ENCODE measurements at regions of chr12 and their contacts with region 1.

Region 1: DNA sequence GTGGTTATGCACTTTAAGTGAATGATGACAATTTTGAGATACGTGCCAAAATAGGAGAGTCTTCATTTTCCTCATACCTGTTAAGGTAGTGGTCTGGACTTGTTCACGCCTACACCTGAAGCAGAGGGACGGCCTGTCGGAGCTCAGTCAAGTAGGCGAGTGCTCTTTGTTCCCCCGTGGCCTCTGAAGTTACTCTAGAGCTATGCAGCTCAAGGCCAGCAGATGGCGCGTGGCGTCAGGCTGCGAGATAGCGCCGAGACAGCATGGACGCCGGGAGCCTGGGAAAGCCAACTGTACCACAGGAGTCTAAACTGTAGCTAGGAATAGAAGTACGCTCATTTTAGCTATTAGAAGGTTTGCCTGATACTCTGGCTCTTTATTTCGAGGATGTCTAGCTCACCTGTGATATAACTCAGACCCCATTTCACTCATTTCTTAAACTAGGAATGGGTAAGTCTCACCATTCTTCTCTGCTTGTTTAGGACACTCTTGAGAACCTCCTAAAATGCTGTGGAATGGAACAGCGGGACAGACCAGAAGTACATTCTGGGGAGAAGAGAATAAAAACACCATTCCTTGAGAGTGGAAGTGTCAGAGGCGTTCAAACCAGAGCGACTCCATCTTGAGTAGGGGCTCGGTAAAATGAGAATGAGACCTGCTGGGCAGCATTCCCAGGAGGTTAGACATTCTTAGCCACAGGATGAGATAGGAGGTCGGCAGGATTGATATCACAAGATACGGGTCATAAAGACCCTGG is 267.4 kb upstream of the HMGA2 start:
- DNase-seq: peak; percentile 36
- ATAC-seq: peak; percentile 71
- H3K4me3 Mint-ChIP-seq: no peak overlapping the region
- H3K27ac Mint-ChIP-seq: no peak overlapping the region
- H3K4me1 Mint-ChIP-seq: peaks cover 6% of the 10 kb centered on the region
- H3K27me3 Mint-ChIP-seq: peaks cover 13% of the 10 kb centered on the region
- CTCF ChIP-seq: no peak

Region 2: DNA sequence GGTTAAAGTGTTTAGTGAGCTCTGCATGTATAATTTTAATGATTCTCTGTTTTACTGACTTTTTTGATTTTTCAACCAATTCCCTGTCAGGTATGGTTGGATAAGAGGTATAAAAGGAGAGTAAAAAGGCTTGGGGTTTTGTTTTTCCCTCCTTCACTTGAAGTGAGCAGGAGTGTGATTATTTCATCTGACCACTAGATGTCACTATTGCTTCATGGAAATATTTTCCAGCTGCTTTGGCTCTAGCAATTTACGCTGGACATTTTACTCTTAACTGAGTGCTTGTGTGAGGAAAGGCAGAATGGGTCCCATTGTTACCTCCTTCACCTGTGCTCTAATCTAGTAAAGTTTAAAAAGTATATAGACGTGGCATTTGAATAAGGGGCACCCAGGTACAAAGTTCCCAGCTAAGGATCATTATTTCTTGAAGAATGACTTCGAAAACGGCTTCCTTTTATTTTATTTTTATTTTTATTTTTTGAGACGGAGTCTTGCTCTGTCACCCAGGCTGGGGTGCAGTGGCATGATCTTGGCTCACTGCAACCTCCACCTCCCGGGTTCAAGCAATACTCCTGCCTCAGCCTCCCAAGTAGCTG is 665.9 kb before region 1 on chr12:
- CTCF ChIA-PET with region 1: interaction called, 6 read pairs
- POLR2A ChIA-PET with region 1: no interaction called
- intact Hi-C with region 1: loop called (anchors 2 kb)
- DNase-seq: no peak
- ATAC-seq: no peak
- H3K4me3 Mint-ChIP-seq: no peak overlapping the region
- H3K27ac Mint-ChIP-seq: no peak overlapping the region
- H3K4me1 Mint-ChIP-seq: no peaks in the 10 kb centered on the region
- H3K27me3 Mint-ChIP-seq: peaks cover 34% of the 10 kb centered on the region
- CTCF ChIP-seq: peak; percentile 95

Region 3: GRCh38 chr12:65666876-65667275 is 110.0 kb after region 1 on chr12:
- CTCF ChIA-PET with region 1: no interaction called
- POLR2A ChIA-PET with region 1: no interaction called
- intact Hi-C with region 1: no loop called
- DNase-seq: no peak
- ATAC-seq: no peak
- H3K4me3 Mint-ChIP-seq: no peak overlapping the region
- H3K27ac Mint-ChIP-seq: no peak overlapping the region
- H3K4me1 Mint-ChIP-seq: no peaks in the 10 kb centered on the region
- H3K27me3 Mint-ChIP-seq: peaks cover 4% of the 10 kb centered on the region
- CTCF ChIP-seq: no peak

Region 4: DNA sequence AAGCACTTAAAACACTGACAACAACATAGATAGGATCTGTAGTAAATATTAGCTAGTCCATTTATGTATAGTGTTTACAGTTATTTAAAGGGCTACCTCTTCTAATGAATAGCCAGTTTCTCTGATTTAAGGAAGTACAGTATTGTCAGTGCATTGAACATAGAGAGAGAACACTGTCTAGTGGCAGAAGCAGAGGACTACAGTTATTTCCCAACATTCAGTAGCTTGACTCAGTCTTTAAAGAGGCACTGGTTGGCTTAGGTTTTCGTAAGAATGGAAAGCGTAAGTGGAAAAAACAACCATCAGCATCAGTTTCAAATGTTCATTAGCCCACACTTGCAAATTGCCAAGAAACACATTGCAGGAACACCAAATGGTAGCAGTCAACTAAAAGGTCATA is 142.4 kb after region 1 on chr12:
- CTCF ChIA-PET with region 1: no interaction called
- POLR2A ChIA-PET with region 1: no interaction called
- intact Hi-C with region 1: no loop called
- DNase-seq: no peak
- ATAC-seq: no peak
- H3K4me3 Mint-ChIP-seq: no peak overlapping the region
- H3K27ac Mint-ChIP-seq: no peak overlapping the region
- H3K4me1 Mint-ChIP-seq: no peaks in the 10 kb centered on the region
- H3K27me3 Mint-ChIP-seq: peaks cover 2% of the 10 kb centered on the region
- CTCF ChIP-seq: no peak

Region 5: DNA sequence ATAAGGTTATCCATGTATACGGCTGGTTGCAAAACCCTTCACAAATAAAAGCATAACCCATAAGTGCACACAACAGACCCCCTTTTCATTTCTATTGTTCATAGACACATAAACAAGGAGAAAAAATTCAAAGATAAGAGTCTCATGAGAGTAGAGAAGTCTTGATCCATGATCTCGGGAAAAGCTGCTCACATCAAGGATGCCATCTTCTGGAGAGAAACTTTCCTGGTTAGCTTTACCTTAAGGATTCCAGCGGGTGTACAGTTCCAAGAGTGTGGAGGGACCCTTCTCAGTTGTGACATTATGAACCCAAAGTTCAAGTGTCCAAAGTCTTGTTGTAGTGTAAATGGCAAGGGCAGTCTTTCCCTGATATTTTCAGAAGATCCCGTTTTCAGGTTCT is 429.2 kb after region 1 on chr12:
- CTCF ChIA-PET with region 1: no interaction called
- POLR2A ChIA-PET with region 1: no interaction called
- intact Hi-C with region 1: loop called (anchors 1 kb)
- DNase-seq: no peak
- ATAC-seq: no peak
- H3K4me3 Mint-ChIP-seq: no peak overlapping the region
- H3K27ac Mint-ChIP-seq: no peak overlapping the region
- H3K4me1 Mint-ChIP-seq: no peaks in the 10 kb centered on the region
- H3K27me3 Mint-ChIP-seq: no peaks in the 10 kb centered on the region
- CTCF ChIP-seq: no peak

Region 6: GRCh38 chr12:66035288-66035966 is 478.6 kb after region 1 on chr12:
- CTCF ChIA-PET with region 1: interaction called, 8 read pairs
- POLR2A ChIA-PET with region 1: no interaction called
- intact Hi-C with region 1: loop called (anchors 1 kb)
- DNase-seq: no peak
- ATAC-seq: no peak
- H3K4me3 Mint-ChIP-seq: no peak overlapping the region
- H3K27ac Mint-ChIP-seq: no peak overlapping the region
- H3K4me1 Mint-ChIP-seq: no peaks in the 10 kb centered on the region
- H3K27me3 Mint-ChIP-seq: peaks cover 6% of the 10 kb centered on the region
- CTCF ChIP-seq: no peak

Region 7: GRCh38 chr12:66087365-66087943 is 530.6 kb after region 1 on chr12:
- CTCF ChIA-PET with region 1: interaction called, 6 read pairs
- POLR2A ChIA-PET with region 1: no interaction called
- intact Hi-C with region 1: loop called (anchors 1 kb)
- DNase-seq: no peak
- ATAC-seq: peak; percentile 49
- H3K4me3 Mint-ChIP-seq: no peak overlapping the region
- H3K27ac Mint-ChIP-seq: no peak overlapping the region
- H3K4me1 Mint-ChIP-seq: peaks cover under 1% of the 10 kb centered on the region
- H3K27me3 Mint-ChIP-seq: peaks cover 15% of the 10 kb centered on the region
- CTCF ChIP-seq: no peak

Region 8: GRCh38 chr12:66107451-66107915 is 550.6 kb after region 1 on chr12:
- CTCF ChIA-PET with region 1: interaction called, 3 read pairs
- POLR2A ChIA-PET with region 1: no interaction called
- intact Hi-C with region 1: loop called (anchors 1 kb)
- DNase-seq: no peak
- ATAC-seq: peak; percentile 85
- H3K4me3 Mint-ChIP-seq: no peak overlapping the region
- H3K27ac Mint-ChIP-seq: no peak overlapping the region
- H3K4me1 Mint-ChIP-seq: peaks cover 3% of the 10 kb centered on the region
- H3K27me3 Mint-ChIP-seq: peaks cover 12% of the 10 kb centered on the region
- CTCF ChIP-seq: peak; percentile 71

Region 9: DNA sequence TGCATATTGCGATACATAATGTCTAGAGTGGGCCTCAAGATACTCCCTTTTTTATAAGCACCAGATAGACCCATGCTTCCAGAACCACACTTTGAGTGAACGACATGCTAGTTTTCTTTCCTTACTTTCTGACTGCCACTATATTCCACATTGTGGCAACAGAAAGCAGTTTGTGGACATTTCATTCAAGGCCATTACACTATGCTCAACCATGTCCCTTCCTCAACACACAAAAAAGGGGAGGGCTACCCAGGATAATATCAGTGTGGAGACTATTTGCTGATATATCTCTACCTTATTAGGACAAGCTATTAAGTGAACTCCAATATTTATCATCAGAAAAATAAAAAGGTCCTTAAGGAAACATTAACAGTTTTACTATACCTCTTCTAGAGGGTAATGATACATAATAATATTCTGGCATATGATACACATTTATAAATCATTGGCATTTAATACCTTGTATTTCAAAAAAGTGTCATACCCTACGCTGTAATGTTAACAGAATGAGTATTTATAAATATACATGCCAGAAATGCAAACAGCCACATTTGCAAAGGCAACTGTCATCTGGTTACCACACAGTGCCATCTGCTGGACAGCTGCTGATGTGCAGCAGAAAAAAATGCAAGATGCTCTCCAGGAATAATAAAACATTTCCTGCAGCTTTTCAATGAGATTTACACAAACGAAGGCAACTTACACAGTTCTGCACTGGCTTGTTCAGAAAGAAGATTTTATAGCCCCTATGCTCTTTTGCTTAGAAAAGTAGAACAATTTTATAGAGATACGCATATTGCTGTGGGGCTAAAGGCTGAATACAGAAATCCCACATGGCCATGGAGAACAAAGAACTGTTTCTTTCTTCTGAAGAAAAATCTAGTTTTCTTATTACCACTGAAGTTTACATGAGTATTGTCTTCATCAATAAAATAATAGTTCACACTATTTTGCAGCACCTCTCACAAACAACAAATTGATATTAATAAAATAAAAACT is 1304.2 kb after region 1 on chr12:
- CTCF ChIA-PET with region 1: no interaction called
- POLR2A ChIA-PET with region 1: no interaction called
- intact Hi-C with region 1: loop called (anchors 2 kb)
- DNase-seq: peak; percentile 32
- ATAC-seq: peak; percentile 50
- H3K4me3 Mint-ChIP-seq: no peak overlapping the region
- H3K27ac Mint-ChIP-seq: no peak overlapping the region
- H3K4me1 Mint-ChIP-seq: no peaks in the 10 kb centered on the region
- H3K27me3 Mint-ChIP-seq: peaks cover 11% of the 10 kb centered on the region
- CTCF ChIP-seq: peak; percentile 99